MCF 10A (cell line): ENCODE measurements at regions of chr15 and their contacts with region 1.

Region 1: GRCh38 chr15:44711356-44712107 is at the start of gene B2M:
- DNase-seq: peak; percentile 98
- H3K4me3 Mint-ChIP-seq: peak within 1 kb of the TSS; percentile 92
- H3K27ac Mint-ChIP-seq: peak within 1 kb of the TSS; percentile 96
- H3K4me1 Mint-ChIP-seq: peaks cover 23% of the 10 kb centered on the region
- H3K27me3 Mint-ChIP-seq: no peaks in the 10 kb centered on the region
- CTCF ChIP-seq: no peak
- total RNA-seq, gene B2M: 605 and 755 TPM in 2 replicates

Region 2: DNA sequence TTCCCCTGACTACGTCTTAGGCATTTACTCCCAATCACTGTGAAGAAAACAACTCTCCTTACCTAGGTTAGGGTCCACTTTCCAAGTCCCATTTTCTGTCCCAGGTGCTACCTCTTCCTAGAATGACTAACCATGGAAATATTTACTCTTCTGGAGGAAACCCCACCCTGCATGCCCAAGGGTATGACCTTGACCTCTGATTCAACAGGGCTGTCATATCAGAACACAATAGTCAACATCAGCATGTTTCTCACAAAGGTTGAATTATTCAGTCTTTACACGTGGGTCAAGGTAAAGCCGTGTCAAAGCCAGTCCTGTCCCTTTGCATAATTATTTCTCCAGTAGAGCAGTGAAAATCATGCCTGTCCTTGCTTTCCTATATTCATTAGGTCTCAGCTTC is 512.1 kb before region 1 on chr15:
- CTCF ChIA-PET with region 1: no interaction called
- POLR2A ChIA-PET with region 1: no interaction called
- intact Hi-C with region 1: no loop called
- DNase-seq: no peak
- H3K4me3 Mint-ChIP-seq: no peak overlapping the region
- H3K27ac Mint-ChIP-seq: no peak overlapping the region
- H3K4me1 Mint-ChIP-seq: peaks cover 5% of the 10 kb centered on the region
- H3K27me3 Mint-ChIP-seq: no peaks in the 10 kb centered on the region
- CTCF ChIP-seq: no peak

Region 3: GRCh38 chr15:44682211-44682610 is 29.3 kb before region 1 on chr15:
- CTCF ChIA-PET with region 1: interaction called, 3 read pairs
- POLR2A ChIA-PET with region 1: interaction called, 21 read pairs
- intact Hi-C with region 1: no loop called
- DNase-seq: no peak
- H3K4me3 Mint-ChIP-seq: no peak overlapping the region
- H3K27ac Mint-ChIP-seq: no peak overlapping the region
- H3K4me1 Mint-ChIP-seq: no peaks in the 10 kb centered on the region
- H3K27me3 Mint-ChIP-seq: peaks cover 26% of the 10 kb centered on the region
- CTCF ChIP-seq: no peak